ENCODE measurements at regions of chr6 and their contacts with region 1.

Region 1: DNA sequence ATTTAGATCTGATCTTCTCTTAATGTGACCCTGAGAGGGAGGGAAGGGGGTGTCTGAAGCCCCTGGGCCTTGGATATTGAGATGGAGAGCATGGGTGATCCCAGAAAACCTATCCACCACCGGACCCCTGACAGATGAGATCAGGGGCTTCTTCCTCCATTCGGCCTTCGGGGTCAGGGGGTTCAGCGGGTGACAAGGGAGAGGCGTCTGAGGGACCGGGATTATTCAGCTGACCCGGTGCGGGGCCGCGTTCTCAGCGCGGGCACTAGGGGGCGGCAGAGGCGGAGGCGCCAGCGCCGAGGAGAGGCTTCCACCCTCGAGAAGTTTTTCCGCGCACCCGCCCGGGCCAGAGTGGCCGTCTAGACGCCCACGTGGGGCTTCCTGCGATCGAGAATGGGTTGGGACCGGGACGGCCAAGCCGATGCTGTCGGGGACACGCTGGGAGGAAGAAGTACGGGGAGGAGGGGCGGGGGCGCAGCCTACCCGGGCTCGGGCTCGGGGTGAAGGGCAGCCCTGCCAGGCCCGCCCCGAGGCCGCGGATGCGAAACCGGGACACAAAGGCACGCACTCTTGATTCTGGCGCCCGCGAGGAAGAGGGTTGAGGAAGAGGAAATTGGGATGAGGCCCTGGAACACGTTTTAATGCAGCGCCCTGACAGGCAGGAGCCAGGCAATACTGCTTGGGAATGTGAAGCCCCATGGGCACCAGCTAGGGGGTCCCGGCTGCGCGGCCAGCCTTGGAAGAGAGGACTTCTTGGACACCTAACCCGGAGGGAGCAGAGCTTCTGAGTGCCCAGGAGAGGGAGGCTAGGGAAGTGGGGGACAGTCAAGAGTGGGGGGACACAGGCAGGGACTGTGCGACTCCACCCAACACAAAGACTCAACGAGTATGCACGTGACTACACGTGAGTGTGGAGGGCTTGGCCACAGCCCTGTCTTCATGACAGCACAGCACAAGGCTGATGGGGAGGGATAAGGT is 30.6 kb downstream of the COL11A2 start:
- DNase-seq: peak; percentile 34 to 70
- ATAC-seq: peak; percentile 88 to 94
- H3K4me3 ChIP-seq: peak overlapping the region; percentile 52 to 77 (median 62)
- H3K27ac ChIP-seq: peak overlapping the region in 2 of 4 donors; percentile 15 to 41
- H3K4me1 ChIP-seq: peaks cover 0 to 6% of the 10 kb centered on the region in 2 donors
- H3K27me3 ChIP-seq: no peaks in the 10 kb centered on the region
- CTCF ChIP-seq: peak; percentile 76 to 97 (median 94)
- POLR2A ChIP-seq: no peak

Region 2: DNA sequence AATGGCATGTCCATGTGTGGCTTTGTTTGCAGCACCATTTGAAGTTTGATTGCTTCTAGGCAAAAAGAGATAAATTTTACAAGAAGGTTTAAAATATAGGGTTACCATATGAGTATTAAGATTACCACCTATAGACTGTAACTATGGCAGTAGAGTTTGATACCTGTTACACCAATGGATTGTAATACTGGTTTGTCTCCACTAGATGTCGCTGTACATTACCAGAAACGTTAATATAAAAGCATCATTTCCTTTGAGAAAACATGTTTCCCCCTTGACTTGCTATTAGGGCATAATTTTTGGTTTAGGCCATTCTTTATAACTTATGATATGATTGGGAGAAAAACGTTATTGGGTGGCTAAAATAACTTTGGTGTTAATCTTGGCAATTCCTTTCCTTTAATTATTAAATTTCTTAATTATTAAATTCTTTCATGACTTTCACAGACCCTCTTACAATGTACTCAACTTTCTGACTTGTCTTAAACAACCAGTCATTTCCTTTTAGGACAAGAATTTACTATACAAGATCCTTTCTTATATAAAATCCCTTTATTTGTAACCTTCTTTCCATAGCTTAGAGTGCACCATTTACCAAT is 43.0 kb before region 1 on chr6:
- in situ Hi-C with region 1: no loop called
- intact Hi-C with region 1: loop called (anchors 2 kb)
- DNase-seq: no peak
- ATAC-seq: peak; percentile 51 to 52
- H3K4me3 ChIP-seq: no peak overlapping the region
- H3K27ac ChIP-seq: no peak overlapping the region
- H3K4me1 ChIP-seq: no peaks in the 10 kb centered on the region
- H3K27me3 ChIP-seq: peaks cover 24 to 35% (median 29%) of the 10 kb centered on the region in 3 donors
- CTCF ChIP-seq: peak; percentile 73 to 90 (median 82)
- POLR2A ChIP-seq: no peak

Region 3: GRCh38 chr6:33467091-33467490 is 305.4 kb after region 1 on chr6:
- in situ Hi-C with region 1: no loop called
- intact Hi-C with region 1: no loop called
- DNase-seq: no peak
- ATAC-seq: no peak
- H3K4me3 ChIP-seq: no peak overlapping the region
- H3K27ac ChIP-seq: no peak overlapping the region
- H3K4me1 ChIP-seq: no peaks in the 10 kb centered on the region
- H3K27me3 ChIP-seq: no peaks in the 10 kb centered on the region
- CTCF ChIP-seq: no peak
- POLR2A ChIP-seq: no peak

Region 4: DNA sequence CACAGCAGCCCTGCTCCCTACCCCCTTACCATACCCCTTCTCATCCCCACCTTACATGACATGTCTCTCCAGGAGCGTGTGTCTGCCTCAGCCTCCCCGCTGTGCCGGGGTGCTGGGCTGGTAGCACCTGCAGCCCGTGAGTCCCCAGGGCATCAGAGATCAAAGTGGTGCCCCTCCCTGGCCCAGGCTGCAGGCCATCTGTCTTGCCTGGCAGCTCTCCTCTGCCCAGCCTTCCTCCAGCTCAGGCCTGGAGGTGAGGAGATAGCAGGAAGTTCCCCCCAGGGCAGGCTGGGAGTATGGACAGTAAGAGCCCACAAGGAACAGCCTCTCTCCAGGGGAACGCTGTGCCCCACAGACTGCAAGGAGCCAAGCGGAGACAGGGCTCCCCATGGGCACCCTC is 949.0 kb after region 1 on chr6:
- in situ Hi-C with region 1: no loop called
- intact Hi-C with region 1: no loop called
- DNase-seq: no peak
- ATAC-seq: no peak
- H3K4me3 ChIP-seq: no peak overlapping the region
- H3K27ac ChIP-seq: no peak overlapping the region
- H3K4me1 ChIP-seq: no peaks in the 10 kb centered on the region
- H3K27me3 ChIP-seq: peaks cover 0 to 5% (median 4%) of the 10 kb centered on the region in 3 donors
- CTCF ChIP-seq: no peak
- POLR2A ChIP-seq: no peak

Measured in gastrocnemius medialis (tissue), 4 donors.